Activated CD4-positive, alpha-beta memory T cell treated with anti-CD3 and anti-CD28 coated beads for 36 hours (primary cell): ENCODE measurements at regions of chr12 and their contacts with region 1.

Region 1: GRCh38 chr12:106136263-106136662 is 2.5 kb downstream of the NUAK1 start:
- DNase-seq: peak; percentile 81
- H3K4me3 Mint-ChIP-seq: no peak overlapping the region
- H3K27ac Mint-ChIP-seq: no peak overlapping the region
- H3K4me1 Mint-ChIP-seq: peaks cover 13% of the 10 kb centered on the region
- H3K27me3 Mint-ChIP-seq: peaks cover 61% of the 10 kb centered on the region

Region 2: GRCh38 chr12:105420659-105421240 is 715.5 kb before region 1 on chr12:
- CTCF ChIA-PET with region 1: interaction called, 80 read pairs
- POLR2A ChIA-PET with region 1: no interaction called
- intact Hi-C with region 1: loop called (anchors 1 kb)
- DNase-seq: peak; percentile 75
- H3K4me3 Mint-ChIP-seq: no peak overlapping the region
- H3K27ac Mint-ChIP-seq: no peak overlapping the region
- H3K4me1 Mint-ChIP-seq: peaks cover 6% of the 10 kb centered on the region
- H3K27me3 Mint-ChIP-seq: no peaks in the 10 kb centered on the region

Region 3: DNA sequence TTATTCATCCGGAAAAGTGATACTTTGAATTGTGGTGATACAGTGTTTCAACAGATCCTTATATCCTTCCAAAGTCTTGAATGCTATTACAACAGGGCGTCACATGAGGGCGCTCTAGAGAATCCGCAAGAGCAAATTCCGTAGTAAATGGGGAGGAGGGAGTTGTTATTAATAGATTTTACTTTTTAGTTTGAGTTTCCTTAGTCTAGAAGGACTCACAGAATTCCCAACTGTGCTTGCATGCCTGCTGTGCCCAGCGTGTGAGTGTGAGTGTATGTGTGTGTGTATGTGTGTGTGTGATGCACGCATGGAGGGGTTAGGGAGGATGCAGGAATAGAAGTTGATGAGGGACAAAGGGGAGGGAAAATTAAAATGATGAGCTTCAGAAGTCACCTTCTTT is 430.5 kb before region 1 on chr12:
- CTCF ChIA-PET with region 1: interaction called, 8 read pairs
- POLR2A ChIA-PET with region 1: no interaction called
- intact Hi-C with region 1: loop called (anchors 5 kb)
- DNase-seq: no peak
- H3K4me3 Mint-ChIP-seq: no peak overlapping the region
- H3K27ac Mint-ChIP-seq: no peak overlapping the region
- H3K4me1 Mint-ChIP-seq: no peaks in the 10 kb centered on the region
- H3K27me3 Mint-ChIP-seq: no peaks in the 10 kb centered on the region

Region 4: DNA sequence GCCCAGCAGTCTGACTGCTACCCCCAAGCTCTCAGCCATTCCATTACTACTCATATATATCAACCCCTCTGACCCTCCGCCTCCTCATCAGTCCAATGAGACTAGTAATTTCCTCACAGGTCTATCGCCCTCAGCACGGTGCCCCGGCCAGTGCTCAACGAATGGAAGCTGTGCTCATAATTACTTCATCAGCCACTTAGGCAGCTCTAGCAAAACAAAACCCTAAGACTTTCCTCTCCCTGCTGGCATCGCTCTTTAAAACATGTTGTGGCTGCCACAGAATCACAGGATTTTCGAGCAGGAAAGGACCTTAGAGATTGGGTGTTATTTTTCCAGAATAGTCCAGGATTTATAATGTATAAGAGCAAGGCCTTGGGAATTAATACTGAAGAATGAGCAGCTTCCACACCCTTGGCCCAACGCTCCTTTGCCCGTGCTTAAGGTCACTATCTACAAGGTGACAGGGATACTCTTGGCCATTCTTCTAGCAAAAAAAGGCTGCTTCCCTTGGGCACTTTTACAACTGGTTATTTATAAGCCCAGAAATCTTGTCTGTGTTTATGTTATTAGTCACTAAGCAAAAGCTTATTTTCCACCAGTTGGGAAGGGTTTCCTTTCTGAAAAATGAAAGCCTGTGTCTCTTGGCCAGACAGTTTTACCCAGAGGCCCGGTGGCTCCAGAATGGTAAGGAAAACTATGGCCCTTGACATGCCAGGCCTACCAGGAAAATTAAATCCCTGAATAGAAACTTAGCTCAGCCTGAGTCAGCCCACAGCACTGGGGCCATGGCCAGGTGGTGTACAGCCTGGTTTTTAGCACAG is 45.5 kb before region 1 on chr12:
- CTCF ChIA-PET with region 1: no interaction called
- POLR2A ChIA-PET with region 1: no interaction called
- intact Hi-C with region 1: no loop called
- DNase-seq: no peak
- H3K4me3 Mint-ChIP-seq: no peak overlapping the region
- H3K27ac Mint-ChIP-seq: no peak overlapping the region
- H3K4me1 Mint-ChIP-seq: no peaks in the 10 kb centered on the region
- H3K27me3 Mint-ChIP-seq: peaks cover 8% of the 10 kb centered on the region

Region 5: GRCh38 chr12:106149096-106149784 is 13.0 kb after region 1 on chr12:
- CTCF ChIA-PET with region 1: interaction called, 29 read pairs
- POLR2A ChIA-PET with region 1: no interaction called
- intact Hi-C with region 1: no loop called
- DNase-seq: no peak
- H3K4me3 Mint-ChIP-seq: no peak overlapping the region
- H3K27ac Mint-ChIP-seq: no peak overlapping the region
- H3K4me1 Mint-ChIP-seq: peaks cover 2% of the 10 kb centered on the region
- H3K27me3 Mint-ChIP-seq: peaks cover 22% of the 10 kb centered on the region

Region 6: GRCh38 chr12:106205208-106206071 is 69.2 kb after region 1 on chr12:
- CTCF ChIA-PET with region 1: no interaction called
- POLR2A ChIA-PET with region 1: no interaction called
- intact Hi-C with region 1: no loop called
- DNase-seq: no peak
- H3K4me3 Mint-ChIP-seq: no peak overlapping the region
- H3K27ac Mint-ChIP-seq: no peak overlapping the region
- H3K4me1 Mint-ChIP-seq: no peaks in the 10 kb centered on the region
- H3K27me3 Mint-ChIP-seq: peaks cover 15% of the 10 kb centered on the region

Region 7: GRCh38 chr12:106345739-106346138 is 209.5 kb after region 1 on chr12:
- CTCF ChIA-PET with region 1: no interaction called
- POLR2A ChIA-PET with region 1: no interaction called
- intact Hi-C with region 1: no loop called
- DNase-seq: no peak
- H3K4me3 Mint-ChIP-seq: no peak overlapping the region
- H3K27ac Mint-ChIP-seq: no peak overlapping the region
- H3K4me1 Mint-ChIP-seq: no peaks in the 10 kb centered on the region
- H3K27me3 Mint-ChIP-seq: no peaks in the 10 kb centered on the region